Ovary (tissue), 10 donors: ENCODE measurements at regions of chr5 and their contacts with region 1.

Region 1: DNA sequence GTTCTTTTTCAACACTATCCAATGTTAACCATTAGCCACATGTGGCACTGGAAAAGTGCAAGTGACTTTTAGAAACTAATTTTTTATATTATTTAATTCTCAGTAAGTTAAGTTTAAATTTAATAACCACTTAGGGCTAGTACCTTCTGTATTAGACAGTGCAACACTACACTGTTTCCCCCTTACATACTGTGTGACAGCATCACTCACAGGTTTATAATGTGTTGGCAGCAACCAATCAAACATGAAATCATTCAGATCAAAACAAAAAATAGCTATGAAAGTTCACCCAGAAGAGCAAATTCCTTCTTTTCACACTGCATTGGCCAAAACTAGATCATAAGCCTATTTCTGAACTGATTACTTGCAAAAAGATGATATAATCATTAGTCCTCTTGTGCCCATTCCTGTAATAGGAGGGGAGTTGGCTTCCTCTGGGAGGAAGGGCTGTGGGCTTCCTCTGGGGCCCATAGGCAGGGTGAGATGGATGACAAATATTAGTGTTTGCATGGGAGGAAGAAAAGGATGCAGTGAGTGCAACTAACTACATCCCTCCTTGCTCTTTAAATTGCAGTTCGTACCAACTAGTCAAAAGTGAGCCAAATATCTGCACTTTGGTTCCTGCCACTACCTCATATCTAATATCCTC is 708.1 kb upstream of the RGMB start:
- DNase-seq: no peak
- H3K4me3 ChIP-seq: no peak overlapping the region
- H3K27ac ChIP-seq: no peak overlapping the region
- H3K4me1 ChIP-seq: no peaks in the 10 kb centered on the region
- H3K27me3 ChIP-seq: no peaks in the 10 kb centered on the region
- CTCF ChIP-seq: no peak
- EP300 ChIP-seq: no peak
- POLR2A ChIP-seq: no peak

Region 2: GRCh38 chr5:98106116-98107031 is 41.0 kb after region 1 on chr5:
- intact Hi-C with region 1: loop called in 1 of 4 experiments (anchors 2 kb)
- DNase-seq: no peak
- H3K4me3 ChIP-seq: no peak overlapping the region
- H3K27ac ChIP-seq: no peak overlapping the region
- H3K4me1 ChIP-seq: no peaks in the 10 kb centered on the region
- H3K27me3 ChIP-seq: no peaks in the 10 kb centered on the region
- CTCF ChIP-seq: no peak
- EP300 ChIP-seq: no peak
- POLR2A ChIP-seq: no peak